ENCODE measurements at regions of chr7 and their contacts with region 1.

Region 1: DNA sequence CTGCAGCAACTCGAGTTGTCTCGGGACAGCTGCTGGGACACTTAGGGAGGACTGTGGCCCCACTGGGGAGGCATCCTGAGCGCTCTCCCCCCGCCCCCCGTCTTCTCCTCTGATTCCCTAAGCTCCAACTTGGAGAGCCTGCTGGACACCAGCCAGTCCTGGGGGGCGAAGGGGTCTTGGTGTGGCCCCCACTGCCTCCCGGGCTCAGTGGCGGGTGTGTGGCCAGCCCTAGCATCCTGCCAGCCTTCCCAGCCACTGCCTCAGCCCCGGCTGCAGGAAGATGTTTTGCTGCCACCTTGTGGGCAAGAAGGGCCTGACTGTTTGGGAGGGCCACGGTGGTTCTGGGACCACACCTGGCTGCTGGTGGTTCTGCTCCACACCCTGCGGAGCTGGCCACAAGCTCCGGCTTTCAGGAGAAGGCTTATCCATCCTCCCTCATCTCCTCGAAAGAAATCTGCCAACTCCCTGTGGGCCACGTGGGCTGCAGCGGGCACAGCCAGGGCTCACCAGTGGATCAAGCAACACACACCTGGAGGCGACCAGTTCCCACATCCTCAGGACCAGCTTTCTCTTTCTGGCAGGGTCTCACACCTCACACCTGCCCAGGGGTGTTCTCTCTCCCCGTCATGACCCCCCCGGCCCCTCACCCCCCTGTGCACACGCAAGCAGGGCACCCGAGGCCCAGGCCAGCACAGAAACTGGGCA is 24.8 kb downstream of the AGAP3 start:
- DNase-seq: peak; percentile 89
- ATAC-seq: peak; percentile 89

Region 2: DNA sequence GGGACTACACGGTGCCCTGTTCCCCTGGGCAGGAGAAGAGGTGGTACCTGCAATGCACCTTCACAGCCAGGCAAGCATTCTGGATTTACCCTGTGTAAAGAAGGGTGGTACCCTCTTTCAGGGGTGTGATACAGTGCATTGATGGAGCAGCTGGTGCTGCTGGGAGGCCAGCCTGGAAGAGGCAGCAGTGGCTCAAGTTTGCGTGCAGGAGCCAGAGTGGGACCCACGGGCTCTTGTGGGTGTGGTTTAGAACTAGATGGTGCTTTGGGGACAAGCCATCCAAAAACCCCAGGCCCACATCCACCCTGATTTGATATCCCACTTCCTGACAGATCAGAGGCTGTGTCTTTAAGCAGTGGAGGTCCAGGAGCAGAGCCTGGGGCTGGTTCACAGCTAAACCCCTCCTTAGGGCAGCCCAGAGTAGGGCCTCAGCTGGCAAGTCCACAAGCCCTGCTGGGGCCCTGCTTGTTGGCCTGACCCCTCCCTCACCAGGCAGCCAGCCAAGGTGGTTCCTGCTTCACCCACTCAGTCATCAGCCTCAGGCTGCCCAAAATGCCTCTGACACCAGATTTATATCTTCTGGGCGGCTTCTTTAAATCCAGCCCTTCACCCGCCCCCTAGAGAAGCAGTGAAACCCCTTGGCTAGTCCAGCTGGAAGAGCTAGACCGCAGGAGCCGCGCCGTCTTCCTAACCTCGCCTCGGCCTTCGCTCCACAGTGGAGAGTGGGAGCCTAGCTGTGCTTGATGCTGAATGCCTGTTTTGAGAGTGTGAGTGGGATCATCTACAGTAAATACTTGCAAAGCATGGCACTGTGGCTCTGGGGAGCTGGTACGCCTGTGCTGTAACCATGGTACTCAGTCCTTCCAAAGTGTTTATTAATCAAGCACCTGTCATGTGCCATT is 64.2 kb before region 1 on chr7:
- intact Hi-C with region 1: loop called (anchors 10 kb)
- DNase-seq: no peak
- ATAC-seq: peak; percentile 14